HepG2 (cell line): ENCODE measurements at regions of chr7 and their contacts with region 1.

Region 1: GRCh38 chr7:105399043-105399725 is 10.5 kb upstream of the SRPK2 start:
- DNase-seq: peak; percentile 16
- ATAC-seq: no peak
- H3K4me3 ChIP-seq: no peak overlapping the region
- H3K27ac ChIP-seq: no peak overlapping the region
- H3K4me1 ChIP-seq: peaks cover 11% of the 10 kb centered on the region
- H3K27me3 ChIP-seq: no peaks in the 10 kb centered on the region
- CTCF ChIP-seq: peak; percentile 21; the same call in 1 of the 2 replicates
- EP300 ChIP-seq: no peak
- POLR2A ChIP-seq: no peak
- RAD21 ChIP-seq: no peak

Region 2: GRCh38 chr7:105156731-105157130 is 242.5 kb before region 1 on chr7:
- CTCF ChIA-PET with region 1: no interaction called
- POLR2A ChIA-PET with region 1: no interaction called
- in situ Hi-C with region 1: no loop called
- intact Hi-C with region 1: no loop called
- DNase-seq: no peak
- ATAC-seq: no peak
- H3K4me3 ChIP-seq: no peak overlapping the region
- H3K27ac ChIP-seq: no peak overlapping the region
- H3K4me1 ChIP-seq: no peaks in the 10 kb centered on the region
- H3K27me3 ChIP-seq: no peaks in the 10 kb centered on the region
- CTCF ChIP-seq: no peak
- EP300 ChIP-seq: no peak
- POLR2A ChIP-seq: no peak
- RAD21 ChIP-seq: no peak

Region 3: GRCh38 chr7:105355701-105356100 is 43.5 kb before region 1 on chr7:
- CTCF ChIA-PET with region 1: no interaction called
- POLR2A ChIA-PET with region 1: no interaction called
- in situ Hi-C with region 1: no loop called
- intact Hi-C with region 1: no loop called
- DNase-seq: no peak
- ATAC-seq: no peak
- H3K4me3 ChIP-seq: no peak overlapping the region
- H3K27ac ChIP-seq: no peak overlapping the region
- H3K4me1 ChIP-seq: peaks cover 48% of the 10 kb centered on the region
- H3K27me3 ChIP-seq: no peaks in the 10 kb centered on the region
- CTCF ChIP-seq: no peak
- EP300 ChIP-seq: no peak
- POLR2A ChIP-seq: no peak
- RAD21 ChIP-seq: no peak

Region 4: DNA sequence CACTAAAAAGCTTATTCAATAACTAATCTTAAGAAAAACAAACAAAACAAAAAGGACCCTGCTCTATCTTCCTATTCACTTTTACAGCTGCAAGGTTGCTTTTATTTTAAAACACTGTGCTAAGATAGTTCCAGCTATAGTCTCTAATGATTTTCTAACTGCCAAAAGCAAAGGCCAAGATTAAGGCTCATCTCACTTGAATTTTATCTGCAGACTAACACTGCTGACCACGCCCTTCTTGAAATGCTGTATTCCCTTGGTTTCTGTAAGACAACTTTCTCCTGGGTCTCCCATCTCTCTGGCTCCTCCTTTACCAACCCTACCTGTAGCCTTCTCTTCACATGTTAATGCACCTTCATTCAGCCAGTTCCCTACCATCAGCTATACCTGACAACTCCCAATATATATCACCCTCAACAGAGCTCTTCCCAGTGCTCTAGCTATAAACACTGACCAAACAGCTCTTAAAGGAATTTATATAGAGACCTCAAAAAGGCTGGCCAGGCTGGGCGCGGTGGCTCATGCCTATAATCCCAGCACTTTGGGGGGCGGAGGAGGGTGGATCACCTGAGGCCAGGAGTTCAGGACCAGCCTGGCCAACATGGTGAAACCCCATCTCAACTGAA is 22.2 kb before region 1 on chr7:
- CTCF ChIA-PET with region 1: no interaction called
- POLR2A ChIA-PET with region 1: no interaction called
- in situ Hi-C with region 1: no loop called
- intact Hi-C with region 1: no loop called
- DNase-seq: no peak
- ATAC-seq: no peak
- H3K4me3 ChIP-seq: no peak overlapping the region
- H3K27ac ChIP-seq: no peak overlapping the region
- H3K4me1 ChIP-seq: peaks cover 7% of the 10 kb centered on the region
- H3K27me3 ChIP-seq: no peaks in the 10 kb centered on the region
- CTCF ChIP-seq: no peak
- EP300 ChIP-seq: no peak
- POLR2A ChIP-seq: no peak
- RAD21 ChIP-seq: no peak

Region 5: GRCh38 chr7:105429746-105430612 is 30.8 kb after region 1 on chr7:
- CTCF ChIA-PET with region 1: interaction called, 4 read pairs
- POLR2A ChIA-PET with region 1: no interaction called
- in situ Hi-C with region 1: no loop called
- intact Hi-C with region 1: loop called (anchors 1 kb)
- DNase-seq: peak; percentile 50
- ATAC-seq: peak; percentile 54
- H3K4me3 ChIP-seq: no peak overlapping the region
- H3K27ac ChIP-seq: no peak overlapping the region
- H3K4me1 ChIP-seq: no peaks in the 10 kb centered on the region
- H3K27me3 ChIP-seq: no peaks in the 10 kb centered on the region
- CTCF ChIP-seq: peak; percentile 75
- EP300 ChIP-seq: no peak
- POLR2A ChIP-seq: no peak
- RAD21 ChIP-seq: peak; percentile 11; the same call in 1 of the 2 replicates

Region 6: DNA sequence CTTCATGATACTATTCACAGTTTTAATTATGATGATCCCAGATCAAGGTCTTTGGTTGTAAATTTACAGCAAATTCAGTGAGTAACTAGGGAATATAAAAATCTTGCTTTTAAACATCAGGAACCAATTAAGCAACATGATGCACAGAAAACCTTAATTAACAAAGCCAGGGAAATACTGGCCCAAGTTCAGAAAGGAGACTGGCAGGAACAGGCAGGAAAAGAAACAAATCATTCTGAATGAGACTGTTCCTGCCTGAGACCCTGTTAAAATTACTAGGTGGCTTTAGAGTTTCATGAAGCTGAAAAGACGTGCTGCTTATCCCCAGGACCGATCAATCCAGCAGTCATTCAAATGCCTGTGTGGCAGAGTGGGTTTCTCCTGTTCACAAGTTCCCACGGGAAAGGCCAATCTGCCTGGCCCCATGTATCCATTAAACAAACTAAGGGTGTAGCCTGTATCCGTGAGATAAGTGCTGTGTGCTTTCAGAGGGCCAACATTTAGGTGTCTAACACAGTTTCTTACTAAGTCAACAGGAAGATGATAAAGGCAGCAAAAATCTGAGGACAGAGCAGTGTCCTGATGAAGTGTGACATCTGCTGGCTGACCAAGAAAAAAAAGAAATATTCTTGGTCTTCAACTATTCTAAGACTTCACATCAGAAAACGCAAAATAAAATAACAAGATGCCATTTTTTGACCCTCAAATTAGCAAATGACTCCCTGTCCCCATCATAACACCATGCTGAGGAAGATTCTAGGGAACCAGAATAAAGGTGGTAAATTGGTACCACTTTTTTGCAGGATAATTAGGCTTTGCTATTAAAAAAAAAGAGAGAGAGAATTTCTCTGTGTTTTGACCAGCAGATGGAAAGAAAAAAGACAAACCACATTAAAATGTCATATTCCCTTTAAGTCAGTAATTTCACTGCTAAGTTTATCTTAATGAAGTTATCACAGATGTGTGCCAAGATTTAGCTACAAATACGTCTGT is 88.7 kb after region 1 on chr7:
- CTCF ChIA-PET with region 1: no interaction called
- POLR2A ChIA-PET with region 1: no interaction called
- in situ Hi-C with region 1: no loop called
- intact Hi-C with region 1: loop called (anchors 1 kb)
- DNase-seq: peak; percentile 62
- ATAC-seq: peak; percentile 84
- H3K4me3 ChIP-seq: no peak overlapping the region
- H3K27ac ChIP-seq: no peak overlapping the region
- H3K4me1 ChIP-seq: 0 out of 2 replicates have a peak, but pooled peaks cover 5% of the 10 kb centered on the region
- H3K27me3 ChIP-seq: no peaks in the 10 kb centered on the region
- CTCF ChIP-seq: peak; percentile 65
- EP300 ChIP-seq: no peak
- POLR2A ChIP-seq: no peak
- RAD21 ChIP-seq: no peak

Region 7: GRCh38 chr7:105589356-105590077 is 190.3 kb after region 1 on chr7:
- CTCF ChIA-PET with region 1: interaction called, 3 read pairs
- POLR2A ChIA-PET with region 1: no interaction called
- in situ Hi-C with region 1: no loop called
- intact Hi-C with region 1: loop called (anchors 1 kb)
- DNase-seq: peak; percentile 66
- ATAC-seq: peak; percentile 94
- H3K4me3 ChIP-seq: no peak overlapping the region
- H3K27ac ChIP-seq: no peak overlapping the region
- H3K4me1 ChIP-seq: peaks cover 9% of the 10 kb centered on the region
- H3K27me3 ChIP-seq: no peaks in the 10 kb centered on the region; a peak in 1 of 5 replicates
- CTCF ChIP-seq: peak; percentile 84
- EP300 ChIP-seq: no peak
- POLR2A ChIP-seq: no peak
- RAD21 ChIP-seq: peak; percentile 66